B cell (primary cell): ENCODE measurements at regions of chr12 and their contacts with region 1.

Region 1: GRCh38 chr12:4579305-4580102 is 17.5 kb downstream of the DYRK4 start:
- DNase-seq: peak; percentile 49
- ATAC-seq: peak; percentile 49
- H3K4me3 ChIP-seq: no peak overlapping the region
- H3K4me3 Mint-ChIP-seq: no peak overlapping the region
- H3K27ac ChIP-seq: no peak overlapping the region
- H3K27ac Mint-ChIP-seq: no peak overlapping the region
- H3K4me1 ChIP-seq: peaks cover 0 to 6% of the 10 kb centered on the region in 2 donors
- H3K4me1 Mint-ChIP-seq: peaks cover 12% of the 10 kb centered on the region
- H3K27me3 ChIP-seq: no peaks in the 10 kb centered on the region
- H3K27me3 Mint-ChIP-seq: no peaks in the 10 kb centered on the region
- CTCF ChIP-seq: no peak

Region 2: DNA sequence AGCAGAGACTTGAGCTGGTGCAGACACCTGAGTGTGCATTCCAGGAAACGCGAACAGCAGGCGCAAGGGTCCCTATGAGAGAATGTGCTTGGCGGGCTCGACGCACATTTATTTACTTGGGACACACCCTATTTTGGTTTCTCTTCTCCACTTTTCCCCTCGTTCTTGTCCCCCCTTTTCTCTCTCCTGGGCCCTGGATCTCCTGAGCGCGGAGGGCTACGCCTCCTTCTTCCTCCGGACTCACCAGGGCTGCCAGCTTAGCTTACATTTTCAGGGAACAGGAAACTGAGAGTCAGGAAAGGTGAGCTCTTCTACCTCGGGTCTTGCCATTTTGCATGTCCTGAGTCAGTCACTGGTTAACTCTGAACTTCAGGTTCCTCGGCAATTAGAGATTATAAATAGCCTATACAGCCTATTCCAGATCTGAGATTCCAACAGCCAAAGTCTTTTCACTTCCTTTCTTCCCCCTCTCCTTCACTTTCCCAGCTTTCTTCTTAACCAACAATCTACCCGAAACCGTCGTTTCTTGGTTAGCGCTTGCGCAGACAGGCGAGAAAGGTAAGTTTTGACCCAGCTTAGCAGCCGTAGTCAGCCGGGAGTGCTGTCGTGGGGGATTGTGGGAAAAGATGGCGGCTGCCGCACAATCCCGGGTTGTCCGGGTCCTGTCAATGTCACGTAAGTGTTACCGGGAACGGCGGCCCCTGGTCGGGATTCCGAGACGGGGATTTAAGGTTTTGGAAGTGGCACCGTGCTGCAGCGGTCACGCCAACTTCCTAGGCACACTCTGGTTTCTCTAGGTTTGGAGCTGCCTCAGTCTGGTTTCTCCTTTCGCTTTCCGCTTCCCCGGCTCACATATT is 69.2 kb after region 1 on chr12 and contains the starts of genes AKAP3 and NDUFA9:
- CTCF ChIA-PET with region 1: no interaction called
- POLR2A ChIA-PET with region 1: no interaction called
- intact Hi-C with region 1: no loop called
- DNase-seq: peak; percentile 89
- ATAC-seq: peak; percentile 97
- H3K4me3 ChIP-seq: peak within 1 kb of the TSS; percentile 83 to 97 (median 90)
- H3K4me3 Mint-ChIP-seq: peak within 1 kb of the TSS; percentile 91
- H3K27ac ChIP-seq: peak within 1 kb of the TSS; percentile 62 to 83
- H3K27ac Mint-ChIP-seq: peak within 1 kb of the TSS; percentile 86
- H3K4me1 ChIP-seq: peaks cover 20 to 22% of the 10 kb centered on the region in 2 donors
- H3K4me1 Mint-ChIP-seq: peaks cover 52% of the 10 kb centered on the region
- H3K27me3 ChIP-seq: no peaks in the 10 kb centered on the region
- H3K27me3 Mint-ChIP-seq: no peaks in the 10 kb centered on the region
- CTCF ChIP-seq: no peak
- total RNA-seq, gene AKAP3: 3.8 and 4.6 TPM in 2 replicates
- total RNA-seq, gene NDUFA9: 73.3 and 74.2 TPM in 2 replicates

Region 3: GRCh38 chr12:4763549-4763948 is 184.0 kb after region 1 on chr12:
- CTCF ChIA-PET with region 1: interaction called, 46 read pairs
- POLR2A ChIA-PET with region 1: no interaction called
- intact Hi-C with region 1: no loop called
- DNase-seq: no peak
- ATAC-seq: no peak
- H3K4me3 ChIP-seq: no peak overlapping the region
- H3K4me3 Mint-ChIP-seq: no peak overlapping the region
- H3K27ac ChIP-seq: no peak overlapping the region
- H3K27ac Mint-ChIP-seq: no peak overlapping the region
- H3K4me1 ChIP-seq: no peaks in the 10 kb centered on the region
- H3K4me1 Mint-ChIP-seq: peaks cover 2% of the 10 kb centered on the region
- H3K27me3 ChIP-seq: peaks cover 0 to 3% (median 0%) of the 10 kb centered on the region in 4 experiments
- H3K27me3 Mint-ChIP-seq: peaks cover 14% of the 10 kb centered on the region
- CTCF ChIP-seq: no peak

Region 4: GRCh38 chr12:4962539-4963486 is 383.3 kb after region 1 on chr12:
- CTCF ChIA-PET with region 1: no interaction called
- POLR2A ChIA-PET with region 1: no interaction called
- intact Hi-C with region 1: no loop called
- DNase-seq: no peak
- ATAC-seq: no peak
- H3K4me3 ChIP-seq: no peak overlapping the region
- H3K4me3 Mint-ChIP-seq: no peak overlapping the region
- H3K27ac ChIP-seq: no peak overlapping the region
- H3K27ac Mint-ChIP-seq: no peak overlapping the region
- H3K4me1 ChIP-seq: no peaks in the 10 kb centered on the region
- H3K4me1 Mint-ChIP-seq: no peaks in the 10 kb centered on the region
- H3K27me3 ChIP-seq: peaks cover 0 to 16% (median 3%) of the 10 kb centered on the region in 4 experiments
- H3K27me3 Mint-ChIP-seq: peaks cover 52% of the 10 kb centered on the region
- CTCF ChIP-seq: no peak

Region 5: GRCh38 chr12:5003020-5003666 is 423.6 kb after region 1 on chr12:
- CTCF ChIA-PET with region 1: no interaction called
- POLR2A ChIA-PET with region 1: no interaction called
- intact Hi-C with region 1: loop called (anchors 2 kb)
- DNase-seq: peak; percentile 62
- ATAC-seq: peak; percentile 60
- H3K4me3 ChIP-seq: no peak overlapping the region
- H3K4me3 Mint-ChIP-seq: no peak overlapping the region
- H3K27ac ChIP-seq: no peak overlapping the region
- H3K27ac Mint-ChIP-seq: no peak overlapping the region
- H3K4me1 ChIP-seq: no peaks in the 10 kb centered on the region
- H3K4me1 Mint-ChIP-seq: no peaks in the 10 kb centered on the region
- H3K27me3 ChIP-seq: peaks cover 0 to 36% (median 5%) of the 10 kb centered on the region in 4 experiments
- H3K27me3 Mint-ChIP-seq: peaks cover 23% of the 10 kb centered on the region
- CTCF ChIP-seq: peak; percentile 82